ENCODE measurements at regions of chr6 and their contacts with region 1.

Region 1: GRCh38 chr6:75381877-75382633 is 97.5 kb upstream of the TMEM30A start:
- DNase-seq: peak; percentile 84
- H3K4me3 ChIP-seq: no peak overlapping the region
- H3K27ac ChIP-seq: peak overlapping the region; percentile 15
- H3K4me1 ChIP-seq: peaks cover 7% of the 10 kb centered on the region
- H3K27me3 ChIP-seq: peaks cover 0 to 5% of the 10 kb centered on the region in 2 experiments
- CTCF ChIP-seq: no peak
- POLR2A ChIP-seq: no peak

Region 2: DNA sequence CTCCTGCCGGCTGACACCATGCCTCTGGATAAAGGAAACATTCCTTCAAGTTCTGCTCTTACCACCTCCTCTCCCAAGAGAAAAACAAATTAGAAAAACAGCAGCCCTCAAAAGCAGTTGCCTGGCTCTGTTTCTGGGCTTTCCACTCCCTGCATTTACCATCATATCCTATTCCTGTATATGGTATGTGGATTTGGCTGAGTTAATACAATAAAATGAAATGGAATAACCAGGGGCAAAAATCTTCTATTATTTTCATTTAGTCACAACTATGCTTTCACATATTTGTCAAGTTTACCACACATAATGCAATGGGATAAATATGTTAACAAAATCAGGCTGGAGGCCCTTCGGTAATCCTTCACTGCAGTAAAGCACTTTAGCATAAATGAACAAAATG is 210.5 kb before region 1 on chr6:
- CTCF ChIA-PET with region 1: no interaction called
- POLR2A ChIA-PET with region 1: no interaction called
- dilution Hi-C with region 1: no loop called
- intact Hi-C with region 1: no loop called
- DNase-seq: no peak
- H3K4me3 ChIP-seq: no peak overlapping the region
- H3K27ac ChIP-seq: peak overlapping the region; percentile 15
- H3K4me1 ChIP-seq: peaks cover 10% of the 10 kb centered on the region
- H3K27me3 ChIP-seq: no peaks in the 10 kb centered on the region
- CTCF ChIP-seq: no peak
- POLR2A ChIP-seq: no peak

Region 3: GRCh38 chr6:75275067-75275466 is 107.0 kb before region 1 on chr6:
- CTCF ChIA-PET with region 1: no interaction called
- POLR2A ChIA-PET with region 1: no interaction called
- dilution Hi-C with region 1: no loop called
- intact Hi-C with region 1: no loop called
- DNase-seq: peak; percentile 47
- H3K4me3 ChIP-seq: no peak overlapping the region
- H3K27ac ChIP-seq: no peak overlapping the region
- H3K4me1 ChIP-seq: peaks cover 35% of the 10 kb centered on the region
- H3K27me3 ChIP-seq: no peaks in the 10 kb centered on the region
- CTCF ChIP-seq: no peak
- POLR2A ChIP-seq: no peak

Region 4: GRCh38 chr6:75412969-75413662 is 31.1 kb after region 1 on chr6:
- CTCF ChIA-PET with region 1: no interaction called
- POLR2A ChIA-PET with region 1: no interaction called
- dilution Hi-C with region 1: no loop called
- intact Hi-C with region 1: loop called (anchors 2 kb)
- DNase-seq: peak; percentile 78
- H3K4me3 ChIP-seq: no peak overlapping the region
- H3K27ac ChIP-seq: peak overlapping the region; percentile 82
- H3K4me1 ChIP-seq: peaks cover 43% of the 10 kb centered on the region
- H3K27me3 ChIP-seq: no peaks in the 10 kb centered on the region
- CTCF ChIP-seq: no peak
- POLR2A ChIP-seq: no peak

Region 5: DNA sequence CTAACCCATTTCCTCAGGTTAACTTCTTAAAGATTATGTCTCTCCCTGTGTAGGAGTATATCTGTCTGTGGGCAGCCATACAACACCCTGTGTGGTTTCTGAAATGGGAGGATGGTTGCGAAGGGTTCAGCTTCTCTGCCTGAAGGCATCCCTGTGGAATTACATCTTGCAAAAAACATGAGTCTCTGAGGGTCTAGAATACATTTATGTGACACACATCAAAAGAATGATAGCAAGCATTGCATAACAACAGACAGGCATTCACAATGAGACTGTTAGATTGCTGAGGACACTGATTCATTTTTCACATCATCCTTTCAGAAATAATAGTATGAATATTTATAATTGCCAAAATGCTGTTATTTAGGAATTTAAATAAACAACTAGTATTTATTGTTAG is 1410.3 kb after region 1 on chr6:
- CTCF ChIA-PET with region 1: no interaction called
- POLR2A ChIA-PET with region 1: no interaction called
- dilution Hi-C with region 1: no loop called
- intact Hi-C with region 1: no loop called
- DNase-seq: no peak
- H3K4me3 ChIP-seq: no peak overlapping the region
- H3K27ac ChIP-seq: no peak overlapping the region
- H3K4me1 ChIP-seq: no peaks in the 10 kb centered on the region
- H3K27me3 ChIP-seq: no peaks in the 10 kb centered on the region
- CTCF ChIP-seq: no peak
- POLR2A ChIP-seq: no peak